ENCODE measurements at regions of chr12 and their contacts with region 1.

Region 1: GRCh38 chr12:118044075-118044474 is 16.9 kb downstream of the WSB2 start:
- DNase-seq: peak; percentile 51
- ATAC-seq: peak; percentile 67
- H3K4me3 Mint-ChIP-seq: peak overlapping the region; percentile 33
- H3K27ac Mint-ChIP-seq: peak overlapping the region; percentile 97
- H3K4me1 Mint-ChIP-seq: peaks cover 53% of the 10 kb centered on the region
- H3K27me3 Mint-ChIP-seq: no peaks in the 10 kb centered on the region

Region 2: GRCh38 chr12:118055144-118055557 is 11.1 kb after region 1 on chr12:
- CTCF ChIA-PET with region 1: interaction called, 48 read pairs
- POLR2A ChIA-PET with region 1: interaction called, 8 read pairs
- intact Hi-C with region 1: loop called (anchors 1 kb)
- DNase-seq: peak; percentile 87
- ATAC-seq: peak; percentile 76
- H3K4me3 Mint-ChIP-seq: no peak overlapping the region
- H3K27ac Mint-ChIP-seq: no peak overlapping the region
- H3K4me1 Mint-ChIP-seq: peaks cover 53% of the 10 kb centered on the region
- H3K27me3 Mint-ChIP-seq: no peaks in the 10 kb centered on the region